Activated CD4-positive, alpha-beta T cell treated with anti-CD3 and anti-CD28 coated beads for 36 hours (primary cell): ENCODE measurements at regions of chr2 and their contacts with region 1.

Region 1: DNA sequence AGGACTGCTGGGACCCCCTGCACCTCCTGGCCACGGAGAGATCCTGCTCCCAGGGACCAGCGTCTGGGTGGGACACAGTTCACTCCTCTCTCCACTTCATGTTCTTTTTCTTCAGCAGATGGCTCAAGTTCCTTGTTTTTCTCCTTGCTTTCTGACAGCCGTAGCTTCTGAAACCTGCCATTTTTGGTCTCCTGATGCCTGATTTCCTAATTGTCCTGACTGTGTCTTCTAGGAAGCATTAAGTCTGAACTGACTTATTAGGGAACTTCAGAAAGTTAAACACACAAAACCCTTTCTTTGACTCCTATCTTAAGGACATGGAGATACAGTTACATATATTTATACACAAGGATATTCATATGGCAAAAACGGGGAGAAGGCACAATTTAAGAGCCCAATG is 22.7 kb downstream of the CNNM4 start:
- DNase-seq: no peak
- ATAC-seq: no peak
- H3K4me3 Mint-ChIP-seq: no peak overlapping the region
- H3K27ac Mint-ChIP-seq: no peak overlapping the region
- H3K4me1 Mint-ChIP-seq: peaks cover 5% of the 10 kb centered on the region
- H3K27me3 Mint-ChIP-seq: no peaks in the 10 kb centered on the region

Region 2: DNA sequence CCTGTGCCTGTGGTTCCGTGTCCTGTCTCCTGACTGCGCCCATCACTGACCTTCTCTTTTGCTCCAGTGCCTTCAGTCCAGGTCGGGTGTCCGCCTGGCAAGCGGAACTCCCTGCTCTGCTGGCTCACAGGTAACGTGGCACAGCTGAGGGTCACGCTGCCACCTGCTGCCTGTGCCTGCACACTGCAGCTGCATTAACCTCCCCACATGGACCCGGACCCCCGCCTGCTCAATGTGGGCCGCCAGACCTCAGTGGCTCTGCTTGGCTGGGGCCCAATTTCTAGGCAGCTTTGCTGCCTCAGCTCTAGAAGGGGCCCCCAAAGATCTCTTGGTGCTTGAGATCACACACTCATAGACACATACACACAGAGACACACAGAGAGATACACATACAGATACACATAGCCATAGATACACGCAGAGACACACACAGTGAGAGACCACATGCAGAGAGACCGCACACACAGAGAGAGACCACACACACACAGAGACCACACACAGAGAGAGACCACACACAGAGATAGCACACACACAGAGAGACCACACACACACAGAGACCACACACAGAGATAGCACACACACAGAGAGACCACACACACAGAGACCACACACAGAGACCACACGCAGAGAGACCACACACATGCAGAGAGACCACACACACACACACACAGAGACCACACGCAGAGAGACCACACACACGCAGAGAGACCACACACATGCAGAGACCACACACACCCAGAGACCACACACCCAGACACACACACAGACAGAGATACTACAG is 17.8 kb after region 1 on chr2:
- CTCF ChIA-PET with region 1: interaction called, 5 read pairs
- POLR2A ChIA-PET with region 1: interaction called, 4 read pairs
- intact Hi-C with region 1: loop called in 1 of 2 experiments (anchors 2 kb)
- DNase-seq: peak; percentile 87
- ATAC-seq: peak; percentile 92
- H3K4me3 Mint-ChIP-seq: no peak overlapping the region
- H3K27ac Mint-ChIP-seq: no peak overlapping the region
- H3K4me1 Mint-ChIP-seq: peaks cover 2% of the 10 kb centered on the region
- H3K27me3 Mint-ChIP-seq: no peaks in the 10 kb centered on the region